ENCODE measurements at regions of chr2 and their contacts with region 1.

Region 1: GRCh38 chr2:64144057-64145013 is at the start of gene PELI1:
- DNase-seq: peak; percentile 98
- H3K4me3 Mint-ChIP-seq: peak within 1 kb of the TSS; percentile 94
- H3K27ac Mint-ChIP-seq: peak within 1 kb of the TSS; percentile 94
- H3K4me1 Mint-ChIP-seq: peaks cover 31% of the 10 kb centered on the region
- H3K27me3 Mint-ChIP-seq: no peaks in the 10 kb centered on the region
- total RNA-seq, gene PELI1: 25.7 to 28.0 TPM

Region 2: DNA sequence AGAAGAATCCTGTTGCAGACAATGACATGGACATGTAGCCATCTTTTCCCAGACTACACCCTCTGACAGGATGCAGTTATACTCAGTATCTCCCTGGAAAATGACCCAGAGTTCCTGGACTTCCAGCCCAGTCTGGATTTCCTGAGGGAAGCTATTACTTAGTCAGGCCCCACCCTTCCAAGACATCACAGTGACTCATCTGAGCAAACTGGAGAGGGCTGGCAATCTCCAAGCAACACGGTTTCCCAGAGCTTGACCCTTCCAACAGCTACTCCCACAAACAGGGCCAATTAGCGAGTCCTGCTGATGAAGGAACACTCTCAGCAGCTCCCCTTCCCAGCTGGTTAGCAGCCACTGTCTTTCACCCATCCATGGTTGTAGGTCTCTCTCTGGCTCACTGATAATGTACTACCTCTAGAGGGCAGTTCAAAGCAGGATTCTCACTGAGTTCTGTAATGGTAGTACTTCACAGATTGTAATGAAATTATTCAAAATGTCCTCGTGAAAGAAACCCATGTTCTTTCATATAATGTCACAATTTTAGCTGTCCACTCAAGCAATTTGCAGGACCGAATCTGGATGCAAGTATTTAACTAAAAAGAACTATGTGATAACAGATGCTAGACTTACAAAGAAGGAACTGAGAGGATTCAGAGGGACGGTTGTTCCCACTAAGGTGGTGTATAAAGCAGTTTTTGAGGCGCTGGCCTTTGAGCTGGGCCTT is 445.3 kb before region 1 on chr2:
- CTCF ChIA-PET with region 1: no interaction called
- intact Hi-C with region 1: loop called (anchors 10 kb)
- DNase-seq: peak; percentile 22
- H3K4me3 Mint-ChIP-seq: no peak overlapping the region
- H3K27ac Mint-ChIP-seq: no peak overlapping the region
- H3K4me1 Mint-ChIP-seq: no peaks in the 10 kb centered on the region
- H3K27me3 Mint-ChIP-seq: no peaks in the 10 kb centered on the region

Region 3: GRCh38 chr2:64062829-64063228 is 81.5 kb before region 1 on chr2:
- CTCF ChIA-PET with region 1: no interaction called
- intact Hi-C with region 1: loop called (anchors 1 kb)
- DNase-seq: peak; percentile 36
- H3K4me3 Mint-ChIP-seq: no peak overlapping the region
- H3K27ac Mint-ChIP-seq: peak overlapping the region; percentile 23
- H3K4me1 Mint-ChIP-seq: peaks cover 36% of the 10 kb centered on the region
- H3K27me3 Mint-ChIP-seq: no peaks in the 10 kb centered on the region

Region 4: GRCh38 chr2:64114063-64114911 is 30.0 kb before region 1 on chr2:
- CTCF ChIA-PET with region 1: interaction called, 3 read pairs
- intact Hi-C with region 1: loop called (anchors 1 kb)
- DNase-seq: no peak
- H3K4me3 Mint-ChIP-seq: no peak overlapping the region
- H3K27ac Mint-ChIP-seq: peak overlapping the region; percentile 1
- H3K4me1 Mint-ChIP-seq: peaks cover 80% of the 10 kb centered on the region
- H3K27me3 Mint-ChIP-seq: no peaks in the 10 kb centered on the region

Region 5: DNA sequence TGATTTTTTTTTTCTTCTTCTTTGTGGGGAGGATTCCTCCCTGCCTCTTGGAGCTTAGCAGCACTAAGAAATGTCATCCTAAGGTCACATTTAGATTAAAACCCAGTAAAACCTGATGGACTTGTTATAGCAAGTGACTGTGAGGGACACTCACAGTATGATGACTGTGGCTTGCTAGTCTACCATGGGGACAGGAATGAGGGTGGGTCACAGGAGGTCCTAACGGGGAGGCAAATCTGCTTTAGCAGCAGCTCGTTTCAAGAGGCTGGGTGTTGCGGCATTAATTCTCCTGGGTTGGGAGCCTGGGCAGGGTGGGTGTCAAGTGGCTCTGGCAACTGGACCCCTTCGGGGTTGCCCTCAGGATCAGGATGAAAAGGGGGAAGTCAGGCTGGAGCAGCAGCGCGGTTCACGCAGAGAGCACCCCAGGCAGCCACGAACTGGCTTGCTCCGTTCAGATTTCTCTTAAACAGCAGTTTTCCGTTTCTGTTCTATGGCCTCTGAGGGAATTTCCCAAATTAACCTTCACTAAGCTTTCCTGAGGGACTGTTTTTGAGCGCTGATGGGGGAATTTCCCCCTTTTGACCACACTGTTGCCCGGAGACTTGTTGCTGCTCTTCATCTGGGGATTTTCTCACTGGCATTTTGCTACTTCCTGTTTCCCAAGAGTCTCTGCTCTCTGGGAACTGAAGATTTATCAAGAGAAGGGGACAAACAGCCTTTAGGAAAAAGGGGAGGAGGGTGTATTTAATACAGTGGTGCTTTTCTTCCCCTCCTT is 59.7 kb after region 1 on chr2:
- CTCF ChIA-PET with region 1: no interaction called
- intact Hi-C with region 1: loop called (anchors 1 kb)
- DNase-seq: peak; percentile 75
- H3K4me3 Mint-ChIP-seq: peak overlapping the region; percentile 65
- H3K27ac Mint-ChIP-seq: peak overlapping the region; percentile 90
- H3K4me1 Mint-ChIP-seq: peaks cover 84% of the 10 kb centered on the region
- H3K27me3 Mint-ChIP-seq: no peaks in the 10 kb centered on the region